ENCODE measurements at regions of chr3 and their contacts with region 1.

Region 1: GRCh38 chr3:158790901-158791589 is 10.8 kb upstream of the MFSD1 start:
- DNase-seq: peak; percentile 60
- H3K4me3 Mint-ChIP-seq: peak overlapping the region; percentile 22
- H3K27ac Mint-ChIP-seq: peak overlapping the region; percentile 66
- H3K4me1 Mint-ChIP-seq: peaks cover 62% of the 10 kb centered on the region
- H3K27me3 Mint-ChIP-seq: no peaks in the 10 kb centered on the region
- CTCF ChIP-seq: peak; percentile 94

Region 2: DNA sequence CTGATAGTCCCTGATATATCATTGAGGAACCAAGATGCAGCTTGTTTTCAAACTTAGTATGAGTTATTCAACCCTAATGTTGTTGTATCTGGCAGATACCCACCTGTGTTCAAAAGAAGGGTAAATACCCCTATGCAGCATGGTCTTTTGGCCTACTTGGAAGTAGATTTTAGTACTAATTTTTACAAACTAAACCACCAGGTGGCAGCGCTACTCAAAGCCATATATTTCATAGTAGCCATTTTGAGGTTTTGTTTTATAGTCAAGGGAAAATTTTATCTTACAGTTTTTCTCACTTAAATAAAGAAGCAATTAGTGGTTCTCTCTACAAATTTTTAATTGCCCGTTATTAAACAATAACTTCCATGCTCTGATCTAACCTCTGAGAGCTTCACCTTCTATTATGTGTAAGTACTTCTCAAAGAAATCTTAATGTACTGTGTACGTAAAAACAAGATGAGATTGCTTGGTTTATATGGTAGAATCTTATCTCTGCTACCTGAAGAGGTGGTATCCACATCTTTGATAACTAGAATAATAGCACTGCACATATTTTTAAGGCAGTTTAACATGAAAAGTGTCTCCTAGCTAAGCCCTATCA is 251.5 kb before region 1 on chr3:
- CTCF ChIA-PET with region 1: no interaction called
- intact Hi-C with region 1: loop called (anchors 1 kb)
- DNase-seq: peak; percentile 70
- H3K4me3 Mint-ChIP-seq: no peak overlapping the region
- H3K27ac Mint-ChIP-seq: no peak overlapping the region
- H3K4me1 Mint-ChIP-seq: no peaks in the 10 kb centered on the region
- H3K27me3 Mint-ChIP-seq: no peaks in the 10 kb centered on the region
- CTCF ChIP-seq: peak; percentile 55

Region 3: DNA sequence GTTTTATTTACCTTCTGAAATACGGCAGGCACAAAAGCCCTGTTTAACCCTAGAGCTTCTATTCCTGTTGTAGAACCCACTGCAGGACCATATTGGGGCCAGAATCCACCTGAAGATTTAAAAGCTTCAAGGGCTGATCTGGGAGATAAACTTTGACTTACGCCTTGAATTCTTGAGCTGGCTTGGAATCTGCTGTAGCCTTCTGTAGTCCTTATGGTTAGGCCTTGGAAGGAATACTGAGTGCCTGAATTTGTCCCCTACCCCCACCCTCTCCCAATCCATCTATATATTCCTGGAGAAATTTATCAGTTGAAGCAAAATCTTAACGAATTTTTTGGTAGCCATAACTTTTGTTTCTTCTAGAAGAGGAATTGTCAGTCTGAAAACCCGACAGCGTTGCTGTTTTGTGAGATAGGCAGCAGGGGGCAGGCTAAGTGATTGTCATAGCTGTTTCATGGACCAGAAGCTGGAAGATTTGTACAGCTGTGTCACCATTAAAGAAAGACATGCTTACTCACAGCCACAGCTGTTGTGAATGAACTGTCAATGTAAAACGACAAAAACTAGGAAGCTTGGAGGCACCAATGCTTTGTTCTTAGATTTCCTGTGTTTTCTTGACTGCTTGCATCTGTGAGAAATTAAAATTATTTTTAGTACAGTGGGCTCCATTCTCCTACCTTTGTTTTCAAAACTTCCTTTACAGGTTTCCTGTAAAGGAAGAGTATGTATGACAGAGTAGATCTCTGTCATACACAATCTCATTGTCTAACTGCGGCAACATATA is 131.4 kb before region 1 on chr3:
- CTCF ChIA-PET with region 1: interaction called, 25 read pairs
- intact Hi-C with region 1: loop called (anchors 1 kb)
- DNase-seq: peak; percentile 72
- H3K4me3 Mint-ChIP-seq: no peak overlapping the region
- H3K27ac Mint-ChIP-seq: no peak overlapping the region
- H3K4me1 Mint-ChIP-seq: peaks cover 25% of the 10 kb centered on the region
- H3K27me3 Mint-ChIP-seq: no peaks in the 10 kb centered on the region
- CTCF ChIP-seq: peak; percentile 86

Region 4: DNA sequence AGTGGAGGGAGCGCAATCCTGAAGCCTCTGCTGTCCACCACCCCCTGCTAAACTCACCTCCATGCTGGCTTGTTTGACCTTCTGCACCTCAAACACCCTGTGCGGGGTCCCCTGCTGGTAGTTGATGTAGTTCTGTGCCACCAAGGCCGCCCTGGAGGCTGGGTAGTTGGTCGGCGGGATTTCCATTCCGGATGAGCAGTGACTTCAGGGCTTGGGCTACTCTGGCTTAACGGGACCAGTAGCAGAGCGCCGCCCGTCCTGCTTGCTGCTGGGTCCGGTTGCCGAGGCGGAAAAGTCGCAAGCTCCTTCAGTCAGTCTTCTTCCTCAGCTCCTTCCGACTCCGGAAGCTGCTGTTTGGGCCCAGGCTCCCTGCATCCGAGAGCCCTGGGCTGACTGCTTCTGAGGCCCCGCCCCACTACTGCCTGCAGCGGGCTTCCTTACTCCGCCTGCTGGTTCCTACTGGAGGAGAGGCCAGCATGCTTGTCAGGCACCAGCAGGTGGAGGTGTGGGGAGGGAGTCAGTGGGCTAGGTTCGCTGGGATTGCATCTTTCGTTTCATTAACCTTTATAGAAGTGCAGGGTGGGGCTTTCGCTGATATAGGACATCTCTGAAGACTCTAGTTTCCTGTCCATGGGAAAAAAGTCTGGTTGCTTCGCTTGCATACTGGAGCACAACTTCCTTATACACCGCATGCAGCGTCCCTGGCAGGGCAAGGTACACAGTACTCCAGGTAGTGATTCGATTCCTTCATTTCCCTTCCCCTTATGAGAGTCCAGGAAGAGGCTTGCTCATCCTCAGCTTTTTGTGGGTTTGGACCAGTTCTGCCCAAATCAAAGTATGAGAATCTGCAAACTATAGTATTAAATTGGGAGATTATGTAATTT is 118.5 kb before region 1 on chr3 and contains the start of gene LXN:
- CTCF ChIA-PET with region 1: interaction called, 6 read pairs
- intact Hi-C with region 1: loop called (anchors 1 kb)
- DNase-seq: peak; percentile 96
- H3K4me3 Mint-ChIP-seq: peak within 1 kb of the TSS; percentile 94
- H3K27ac Mint-ChIP-seq: peak within 1 kb of the TSS; percentile 87
- H3K4me1 Mint-ChIP-seq: peaks cover 35% of the 10 kb centered on the region
- H3K27me3 Mint-ChIP-seq: no peaks in the 10 kb centered on the region
- CTCF ChIP-seq: peak; percentile 93
- total RNA-seq, gene LXN: 42.8 and 43.4 TPM in 2 replicates

Region 5: DNA sequence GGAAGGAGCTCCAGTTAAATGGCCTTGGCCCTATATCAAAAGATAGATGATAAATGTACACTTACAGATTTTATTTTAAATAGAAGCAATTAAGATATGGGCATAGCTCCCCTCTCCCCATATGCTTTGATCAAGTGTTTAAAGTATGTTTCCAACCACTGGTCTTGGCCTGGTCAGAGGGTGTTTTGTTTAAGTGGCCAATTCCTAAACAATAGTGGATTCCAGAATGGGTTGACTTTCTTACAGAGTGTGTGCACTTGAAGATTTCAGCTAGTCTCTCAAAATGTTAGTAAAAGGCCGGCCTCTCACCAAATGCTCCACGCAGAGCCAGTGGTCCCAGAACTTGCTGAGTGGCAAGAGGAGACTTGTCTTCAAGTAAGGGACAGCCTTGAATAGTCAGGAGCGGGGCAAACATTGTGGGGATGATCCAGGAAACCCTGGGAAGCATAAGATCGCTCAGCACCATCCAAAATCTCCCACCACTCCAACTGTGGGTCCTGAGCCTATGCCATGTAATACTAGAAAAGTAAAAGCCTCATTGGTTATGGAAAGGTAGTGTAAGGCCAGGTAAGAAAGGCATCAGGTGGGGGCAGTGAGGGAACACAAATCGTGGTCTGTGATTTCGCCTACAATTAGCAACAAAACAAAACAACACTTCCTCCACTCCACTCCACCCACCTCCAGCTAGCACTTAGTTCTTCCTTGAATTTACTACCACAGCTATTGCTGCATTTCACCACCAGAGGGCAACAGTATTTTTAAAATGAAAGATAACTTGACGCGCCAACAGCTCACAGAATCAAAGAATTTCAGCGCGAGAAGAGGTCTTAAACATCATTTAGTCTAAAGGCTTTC is 63.6 kb before region 1 on chr3:
- CTCF ChIA-PET with region 1: interaction called, 98 read pairs
- intact Hi-C with region 1: loop called (anchors 1 kb)
- DNase-seq: peak; percentile 80
- H3K4me3 Mint-ChIP-seq: peak overlapping the region; percentile 93
- H3K27ac Mint-ChIP-seq: peak overlapping the region; percentile 37
- H3K4me1 Mint-ChIP-seq: peaks cover 76% of the 10 kb centered on the region
- H3K27me3 Mint-ChIP-seq: no peaks in the 10 kb centered on the region
- CTCF ChIP-seq: peak; percentile 87

Region 6: DNA sequence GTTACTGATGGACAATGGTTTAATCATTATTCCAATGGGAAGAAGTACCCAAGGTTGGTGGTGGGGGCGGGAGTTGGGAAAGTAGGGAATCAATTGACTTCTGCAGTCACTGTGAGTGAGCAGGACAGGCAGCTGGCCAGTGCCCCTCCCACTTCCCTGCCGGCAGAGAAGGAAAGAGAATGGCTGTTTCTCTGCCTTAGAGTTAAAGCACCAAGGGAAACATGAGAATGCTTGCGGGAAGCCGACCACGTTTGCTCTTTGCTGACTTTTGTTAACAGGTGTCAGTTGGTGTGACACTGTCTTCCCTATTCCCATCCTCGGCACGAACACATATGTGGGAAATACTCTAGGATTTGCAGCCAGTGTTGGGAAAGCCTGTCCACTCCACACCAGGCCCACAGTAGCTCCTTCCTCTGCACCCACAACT is 22.7 kb before region 1 on chr3:
- CTCF ChIA-PET with region 1: interaction called, 14 read pairs
- intact Hi-C with region 1: no loop called
- DNase-seq: peak; percentile 86
- H3K4me3 Mint-ChIP-seq: peak overlapping the region; percentile 13
- H3K27ac Mint-ChIP-seq: peak overlapping the region; percentile 100
- H3K4me1 Mint-ChIP-seq: peaks cover 90% of the 10 kb centered on the region
- H3K27me3 Mint-ChIP-seq: no peaks in the 10 kb centered on the region
- CTCF ChIP-seq: no peak

Region 7: GRCh38 chr3:158773845-158774830 is 16.9 kb before region 1 on chr3:
- CTCF ChIA-PET with region 1: interaction called, 14 read pairs
- intact Hi-C with region 1: loop called (anchors 1 kb)
- DNase-seq: peak; percentile 61
- H3K4me3 Mint-ChIP-seq: peak overlapping the region; percentile 48
- H3K27ac Mint-ChIP-seq: peak overlapping the region; percentile 100
- H3K4me1 Mint-ChIP-seq: peaks cover 75% of the 10 kb centered on the region
- H3K27me3 Mint-ChIP-seq: no peaks in the 10 kb centered on the region
- CTCF ChIP-seq: peak; percentile 52

Measured in Calu3 (cell line).